Activated CD4-positive, alpha-beta T cell treated with anti-CD3 and anti-CD28 coated beads for 36 hours (primary cell): ENCODE measurements at regions of chr6 and their contacts with region 1.

Region 1: GRCh38 chr6:31597006-31597405 is 4.2 kb upstream of the NCR3 start:
- DNase-seq: peak; percentile 61
- ATAC-seq: peak; percentile 78
- H3K4me3 Mint-ChIP-seq: no peak overlapping the region
- H3K27ac Mint-ChIP-seq: no peak overlapping the region
- H3K4me1 Mint-ChIP-seq: peaks cover 46% of the 10 kb centered on the region
- H3K27me3 Mint-ChIP-seq: no peaks in the 10 kb centered on the region

Region 2: GRCh38 chr6:31403283-31403989 is 193.6 kb before region 1 on chr6 and contains the start of gene MICA:
- CTCF ChIA-PET with region 1: interaction called, 3 read pairs
- POLR2A ChIA-PET with region 1: no interaction called
- intact Hi-C with region 1: loop called in 1 of 2 experiments (anchors 1 kb)
- DNase-seq: peak; percentile 83
- ATAC-seq: peak; percentile 68
- H3K4me3 Mint-ChIP-seq: peak within 1 kb of the TSS; percentile 71
- H3K27ac Mint-ChIP-seq: peak within 1 kb of the TSS; percentile 71
- H3K4me1 Mint-ChIP-seq: peaks cover 62% of the 10 kb centered on the region
- H3K27me3 Mint-ChIP-seq: no peaks in the 10 kb centered on the region
- total RNA-seq, gene MICA: 6.3 to 7.1 TPM

Region 3: GRCh38 chr6:31559958-31560696 is 36.9 kb before region 1 on chr6:
- CTCF ChIA-PET with region 1: interaction called, 873 read pairs
- POLR2A ChIA-PET with region 1: interaction called, 8 read pairs
- intact Hi-C with region 1: no loop called
- DNase-seq: peak; percentile 80
- ATAC-seq: peak; percentile 72
- H3K4me3 Mint-ChIP-seq: peak overlapping the region; percentile 66
- H3K27ac Mint-ChIP-seq: peak overlapping the region; percentile 92
- H3K4me1 Mint-ChIP-seq: peaks cover 81% of the 10 kb centered on the region
- H3K27me3 Mint-ChIP-seq: peaks cover 3% of the 10 kb centered on the region

Region 4: DNA sequence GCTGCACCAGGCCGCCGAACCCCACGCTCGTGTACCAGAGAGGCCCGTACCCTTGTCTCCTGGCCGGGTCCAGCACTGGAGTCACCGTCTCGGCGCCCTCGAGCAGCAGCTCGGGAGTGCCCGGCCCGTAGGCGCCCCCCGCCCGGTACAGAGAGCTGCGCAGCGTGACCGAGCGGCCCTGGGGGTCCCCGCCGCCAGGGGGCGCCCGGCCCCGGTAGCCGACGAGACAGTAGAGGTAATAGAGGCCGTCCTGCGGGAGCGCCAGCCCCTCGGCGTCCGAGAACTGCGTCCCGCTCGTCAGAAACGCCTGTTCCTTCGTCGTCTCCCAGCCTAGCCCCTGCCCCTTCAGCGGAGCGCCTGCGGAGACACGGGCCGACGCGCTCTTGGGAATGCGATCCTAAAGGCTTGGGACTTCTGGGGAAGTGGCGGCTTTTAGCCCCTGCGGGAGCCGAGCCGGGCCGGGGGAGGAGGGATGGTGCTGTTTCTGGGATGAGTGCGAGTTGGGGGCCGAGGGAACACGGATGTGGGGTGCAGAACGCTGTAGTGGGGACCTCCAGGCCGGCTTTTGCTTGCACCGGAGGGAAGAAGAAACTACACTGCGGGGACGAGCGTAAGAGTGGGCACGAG is 16.1 kb before region 1 on chr6:
- CTCF ChIA-PET with region 1: interaction called, 873 read pairs
- POLR2A ChIA-PET with region 1: interaction called, 10 read pairs
- intact Hi-C with region 1: loop called (anchors 1 kb)
- DNase-seq: peak; percentile 94
- ATAC-seq: peak; percentile 67
- H3K4me3 Mint-ChIP-seq: peak overlapping the region; percentile 97
- H3K27ac Mint-ChIP-seq: peak overlapping the region; percentile 97
- H3K4me1 Mint-ChIP-seq: peaks cover 56% of the 10 kb centered on the region
- H3K27me3 Mint-ChIP-seq: no peaks in the 10 kb centered on the region

Region 5: GRCh38 chr6:31614684-31615578 is 17.9 kb after region 1 on chr6 and contains the start of gene AIF1:
- CTCF ChIA-PET with region 1: interaction called, 41 read pairs
- POLR2A ChIA-PET with region 1: no interaction called
- intact Hi-C with region 1: no loop called
- DNase-seq: no peak
- ATAC-seq: no peak
- H3K4me3 Mint-ChIP-seq: peak within 1 kb of the TSS; percentile 75
- H3K27ac Mint-ChIP-seq: peak within 1 kb of the TSS; percentile 86
- H3K4me1 Mint-ChIP-seq: peaks cover 39% of the 10 kb centered on the region
- H3K27me3 Mint-ChIP-seq: no peaks in the 10 kb centered on the region
- total RNA-seq, gene AIF1: 89.2 to 96.1 TPM

Region 6: DNA sequence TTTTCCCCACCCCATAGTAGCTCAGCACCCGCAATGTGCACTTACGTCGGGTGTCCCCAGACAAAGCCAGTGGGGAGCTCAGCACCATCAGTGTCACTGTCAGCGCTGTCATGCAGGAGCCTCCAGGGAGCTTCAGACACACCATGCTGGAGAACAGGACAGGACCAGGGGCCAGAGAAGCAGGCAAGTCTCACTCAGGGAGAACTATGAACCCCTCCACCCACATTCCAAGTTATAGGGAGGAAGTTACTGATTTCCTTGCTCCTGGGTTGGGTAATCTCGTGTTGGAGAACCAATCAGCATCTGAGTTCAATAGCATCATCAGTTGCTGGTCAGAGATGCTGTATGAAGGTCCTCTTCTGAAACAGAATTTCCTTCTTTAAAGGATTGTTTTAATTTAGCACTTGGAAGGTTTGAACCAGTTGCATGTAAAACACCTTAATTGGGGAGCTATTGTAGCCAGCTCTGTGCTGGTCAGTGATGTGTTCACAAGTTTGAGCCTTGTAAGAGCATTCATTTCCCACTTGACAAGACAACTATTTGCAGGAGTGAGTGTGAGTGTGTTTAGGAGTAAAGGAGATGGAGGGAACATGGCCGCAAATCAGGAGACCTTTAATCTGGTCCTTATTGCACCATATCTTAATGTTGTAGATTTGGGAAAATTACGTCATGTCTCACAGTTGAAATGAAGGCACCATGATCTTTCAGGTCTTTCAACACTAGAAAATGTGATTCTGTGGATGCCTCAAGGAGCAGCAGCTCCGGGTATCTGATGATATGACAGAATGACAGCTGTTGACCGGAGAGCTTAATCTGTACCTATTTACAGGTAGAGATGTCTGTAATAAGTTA is 992.8 kb after region 1 on chr6 and contains the start of gene HLA-DRB1:
- CTCF ChIA-PET with region 1: no interaction called
- POLR2A ChIA-PET with region 1: no interaction called
- intact Hi-C with region 1: no loop called
- DNase-seq: peak; percentile 29
- ATAC-seq: peak; percentile 94
- H3K4me3 Mint-ChIP-seq: peak within 1 kb of the TSS; percentile 61
- H3K27ac Mint-ChIP-seq: no peak within 1 kb of the TSS
- H3K4me1 Mint-ChIP-seq: peaks cover 2% of the 10 kb centered on the region
- H3K27me3 Mint-ChIP-seq: no peaks in the 10 kb centered on the region
- total RNA-seq, gene HLA-DRB1: 12.7 to 16.6 TPM